ENCODE measurements at regions of chr20 and their contacts with region 1.

Region 1: DNA sequence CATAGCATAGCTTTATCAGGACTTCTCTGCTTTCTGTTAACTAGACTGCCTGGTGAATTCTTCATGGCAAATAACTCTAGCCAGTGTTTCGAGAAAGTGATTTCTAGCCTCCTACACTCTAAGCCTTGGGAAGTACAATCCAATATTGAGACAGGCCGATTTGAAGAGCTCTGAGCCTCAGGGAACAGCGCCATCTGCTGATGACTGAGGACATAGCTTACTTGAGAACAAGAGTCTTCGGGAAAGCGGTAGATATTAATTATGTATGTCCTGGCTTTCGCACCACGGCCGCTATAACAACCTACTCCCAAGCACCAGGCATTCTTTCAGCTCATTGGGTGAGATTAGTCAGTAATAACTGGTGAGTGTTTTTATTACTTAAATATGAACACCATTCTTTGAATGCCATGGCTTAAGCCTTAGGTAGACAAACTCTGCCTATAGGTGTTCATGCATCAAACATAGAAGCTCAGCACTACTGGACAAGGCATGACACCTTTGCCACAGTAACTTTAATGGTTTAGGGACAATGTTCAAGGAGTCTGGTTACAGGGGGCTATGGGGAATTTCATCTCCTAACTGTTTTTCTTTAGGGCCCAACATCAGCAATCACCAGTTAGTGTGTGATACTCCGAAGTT is 518.6 kb downstream of the BMP2 start:
- DNase-seq: peak; percentile 29
- H3K4me3 ChIP-seq: no peak overlapping the region; a peak in 1 of 4 replicates
- H3K27ac ChIP-seq: no peak overlapping the region
- H3K4me1 ChIP-seq: no peaks in the 10 kb centered on the region
- H3K27me3 ChIP-seq: no peaks in the 10 kb centered on the region; the same call in 1 of the 2 replicates
- CTCF ChIP-seq: peak; percentile 85
- EP300 ChIP-seq: no peak
- RAD21 ChIP-seq: peak; percentile 76

Region 2: DNA sequence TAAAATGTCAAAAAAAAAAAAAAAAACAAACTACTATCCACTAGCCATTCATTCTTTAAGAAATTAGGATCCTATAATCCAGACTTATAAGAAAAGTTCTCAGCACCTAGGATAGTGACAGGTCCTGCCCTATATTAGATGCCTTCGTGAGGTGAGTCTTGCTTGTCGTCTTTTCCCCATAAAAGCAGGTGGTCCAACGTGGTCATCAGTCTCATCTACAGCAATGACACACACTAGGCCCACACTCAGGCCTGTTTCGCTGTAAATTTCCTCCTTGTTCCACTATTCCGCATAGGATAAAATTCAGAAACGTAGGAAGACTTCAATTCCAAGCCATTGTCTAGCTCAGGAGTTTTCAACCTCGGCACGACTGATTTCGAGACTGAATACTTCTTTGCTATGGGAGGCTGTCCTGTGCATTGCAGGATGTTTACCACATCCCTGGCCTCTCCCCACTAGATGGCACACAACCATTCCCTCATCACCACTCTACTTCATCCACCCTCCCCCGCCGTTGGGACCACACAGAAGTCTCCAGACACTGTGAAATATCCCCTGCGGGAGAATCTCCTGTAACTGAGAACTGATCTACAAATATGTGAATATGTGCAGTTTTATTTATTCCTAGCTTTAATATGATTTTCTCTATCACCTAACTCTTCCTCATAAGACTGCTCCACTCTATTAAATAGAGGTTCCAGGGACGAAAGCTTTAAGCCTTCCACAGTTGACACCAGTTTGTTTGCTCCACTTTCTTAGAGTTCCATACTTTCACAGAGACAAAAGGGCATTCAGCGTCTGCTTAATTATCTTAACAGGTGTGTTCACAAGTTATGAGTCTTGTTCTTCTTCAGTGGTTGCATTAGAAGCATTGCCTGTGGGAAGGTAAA is 172.2 kb before region 1 on chr20:
- CTCF ChIA-PET with region 1: interaction called, 10 read pairs
- POLR2A ChIA-PET with region 1: no interaction called
- DNase-seq: peak; percentile 56
- H3K4me3 ChIP-seq: no peak overlapping the region
- H3K27ac ChIP-seq: no peak overlapping the region
- H3K4me1 ChIP-seq: no peaks in the 10 kb centered on the region
- H3K27me3 ChIP-seq: no peaks in the 10 kb centered on the region
- CTCF ChIP-seq: peak; percentile 38; the same call in 1 of the 2 replicates
- EP300 ChIP-seq: no peak
- RAD21 ChIP-seq: peak; percentile 47

Region 3: DNA sequence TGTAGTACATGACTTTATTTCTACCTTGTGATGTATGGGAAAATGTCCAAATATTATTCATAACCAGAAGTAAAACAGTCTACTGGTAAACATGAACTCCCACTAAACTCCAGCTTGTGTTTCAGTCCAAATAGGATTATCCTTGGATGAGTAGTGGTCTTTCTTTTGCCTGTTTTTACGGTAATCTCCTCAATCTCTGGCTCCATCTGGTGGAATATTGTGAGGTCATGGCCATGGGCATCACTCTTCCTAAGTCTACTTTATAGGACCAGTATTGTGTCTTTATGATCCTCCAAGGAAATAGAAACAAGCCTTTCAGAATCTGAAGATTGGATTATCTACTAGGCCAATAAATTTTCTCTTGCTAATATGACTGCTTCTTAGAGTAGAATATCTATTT is 13.5 kb before region 1 on chr20:
- CTCF ChIA-PET with region 1: interaction called, 27 read pairs
- POLR2A ChIA-PET with region 1: no interaction called
- DNase-seq: no peak
- H3K4me3 ChIP-seq: no peak overlapping the region
- H3K27ac ChIP-seq: no peak overlapping the region
- H3K4me1 ChIP-seq: no peaks in the 10 kb centered on the region
- H3K27me3 ChIP-seq: no peaks in the 10 kb centered on the region
- CTCF ChIP-seq: peak; percentile 15
- EP300 ChIP-seq: no peak
- RAD21 ChIP-seq: peak; percentile 26; the same call in 1 of the 2 replicates

Region 4: GRCh38 chr20:7302250-7302649 is 16.2 kb after region 1 on chr20:
- CTCF ChIA-PET with region 1: interaction called, 10 read pairs
- POLR2A ChIA-PET with region 1: no interaction called
- DNase-seq: no peak
- H3K4me3 ChIP-seq: no peak overlapping the region
- H3K27ac ChIP-seq: no peak overlapping the region
- H3K4me1 ChIP-seq: no peaks in the 10 kb centered on the region
- H3K27me3 ChIP-seq: no peaks in the 10 kb centered on the region
- CTCF ChIP-seq: no peak
- EP300 ChIP-seq: no peak
- RAD21 ChIP-seq: no peak

Region 5: GRCh38 chr20:7490288-7490687 is 204.3 kb after region 1 on chr20:
- CTCF ChIA-PET with region 1: no interaction called
- POLR2A ChIA-PET with region 1: no interaction called
- DNase-seq: no peak
- H3K4me3 ChIP-seq: no peak overlapping the region
- H3K27ac ChIP-seq: no peak overlapping the region
- H3K4me1 ChIP-seq: no peaks in the 10 kb centered on the region
- H3K27me3 ChIP-seq: no peaks in the 10 kb centered on the region
- CTCF ChIP-seq: no peak
- EP300 ChIP-seq: no peak
- RAD21 ChIP-seq: no peak